Heart left ventricle (tissue), 16 donors: ENCODE measurements at regions of chr15 and their contacts with region 1.

Region 1: GRCh38 chr15:38440353-38441129 is 13.4 kb upstream of the FAM98B start:
- DNase-seq: peak in 4 of 5 donors; percentile 16 to 30 (median 28)
- ATAC-seq: peak; percentile 55 to 82 (median 80)
- H3K4me3 ChIP-seq: no peak overlapping the region
- H3K27ac ChIP-seq: no peak overlapping the region
- H3K4me1 ChIP-seq: peaks cover 0 to 8% (median 0%) of the 10 kb centered on the region in 12 donors
- H3K27me3 ChIP-seq: peaks cover 0 to 8% (median 0%) of the 10 kb centered on the region in 9 donors
- CTCF ChIP-seq: peak; percentile 80 to 95 (median 92)
- POLR2A ChIP-seq: no peak

Region 2: DNA sequence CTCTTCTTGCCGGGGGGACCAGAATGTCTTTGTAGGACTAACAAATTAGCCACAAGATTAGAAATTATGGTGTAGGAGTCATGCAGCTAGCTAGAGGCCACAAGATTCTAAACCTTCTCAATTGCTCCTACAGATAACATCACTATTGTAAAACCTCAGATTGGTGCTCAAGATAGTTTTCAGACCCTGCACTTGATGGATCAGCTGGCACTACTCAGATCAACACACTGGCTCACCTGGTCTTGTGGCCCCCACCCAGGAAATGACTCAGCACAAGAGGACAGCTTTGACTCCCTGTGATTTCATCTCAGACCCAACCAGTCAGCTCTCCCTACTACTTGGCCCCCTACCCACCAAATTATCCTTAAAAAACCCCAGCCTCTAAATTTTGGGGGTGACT is 248.2 kb after region 1 on chr15:
- intact Hi-C with region 1: loop called in 9 of 10 experiments (anchors 2 to 10 kb)
- DNase-seq: no peak
- ATAC-seq: no peak
- H3K4me3 ChIP-seq: no peak overlapping the region
- H3K27ac ChIP-seq: peak overlapping the region in 1 of 12 donors; percentile 54
- H3K4me1 ChIP-seq: peaks cover 0 to 40% (median 0%) of the 10 kb centered on the region in 12 donors
- H3K27me3 ChIP-seq: no peaks in the 10 kb centered on the region
- CTCF ChIP-seq: no peak
- POLR2A ChIP-seq: no peak

Region 3: DNA sequence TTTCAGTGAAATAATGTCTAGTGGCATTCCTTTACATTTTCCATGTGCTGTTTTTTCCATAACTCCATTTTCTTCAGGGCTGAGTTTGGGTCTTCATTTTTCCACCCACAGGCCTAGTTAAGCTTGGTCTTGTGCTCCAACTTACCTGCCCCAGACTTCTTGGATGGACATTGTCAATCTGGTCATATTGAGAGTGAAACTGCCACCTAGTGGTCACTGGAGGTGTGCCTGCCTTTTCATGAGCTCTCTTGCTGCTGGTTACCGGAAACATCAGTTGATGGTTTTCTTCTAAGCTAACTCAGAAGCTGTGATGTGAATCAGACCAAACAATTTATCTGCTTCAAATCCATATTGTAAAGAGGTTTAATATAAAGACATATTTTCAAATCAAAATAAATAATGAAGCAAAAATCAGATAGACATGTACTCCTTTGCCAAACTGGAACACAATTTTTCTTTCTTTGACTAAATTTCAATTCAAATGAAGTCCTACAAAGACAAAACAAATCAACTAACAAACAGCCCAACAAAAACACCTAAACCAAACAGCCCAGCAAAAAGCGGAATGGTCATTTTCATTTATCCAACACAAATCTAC is 259.2 kb after region 1 on chr15:
- intact Hi-C with region 1: loop called in 2 of 10 experiments (anchors 5 kb)
- DNase-seq: peak in 3 of 5 donors; percentile 24 to 43 (median 34)
- ATAC-seq: peak in 2 of 4 donors; percentile 25 to 43
- H3K4me3 ChIP-seq: no peak overlapping the region
- H3K27ac ChIP-seq: no peak overlapping the region
- H3K4me1 ChIP-seq: peaks cover 0 to 15% (median 0%) of the 10 kb centered on the region in 12 donors
- H3K27me3 ChIP-seq: peaks cover 0 to 3% (median 0%) of the 10 kb centered on the region in 9 donors
- CTCF ChIP-seq: peak; percentile 68 to 90 (median 78)
- POLR2A ChIP-seq: no peak